ENCODE measurements at regions of chr1 and their contacts with region 1.

Region 1: GRCh38 chr1:161071886-161072371 is 2.2 kb upstream of the ARHGAP30 start:
- DNase-seq: peak; percentile 59 to 72
- ATAC-seq: peak; percentile 33 to 67 (median 55)
- H3K4me3 ChIP-seq: no peak overlapping the region
- H3K27ac ChIP-seq: no peak overlapping the region
- H3K4me1 ChIP-seq: no peaks in the 10 kb centered on the region
- H3K27me3 ChIP-seq: no peaks in the 10 kb centered on the region
- CTCF ChIP-seq: peak; percentile 44

Region 2: DNA sequence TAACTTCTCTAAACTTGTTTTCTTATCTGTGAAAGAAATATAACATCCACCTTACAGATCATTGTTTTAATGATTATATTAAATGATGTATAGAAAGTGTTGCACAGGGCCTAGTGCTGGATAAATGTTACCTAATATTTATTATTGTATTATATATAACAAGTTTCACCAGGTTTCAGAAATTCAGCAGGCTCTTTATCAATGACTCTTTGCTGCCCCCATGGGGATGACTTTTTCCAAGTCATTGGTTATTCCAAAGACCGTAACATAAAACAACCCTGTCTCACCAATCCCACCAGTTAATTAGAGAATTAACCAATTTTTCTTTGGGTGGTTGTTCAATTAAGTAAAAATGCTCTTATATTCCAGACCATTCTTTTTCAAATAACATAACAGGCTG is 67.8 kb after region 1 on chr1:
- intact Hi-C with region 1: loop called in 1 of 2 experiments (anchors 5 kb)
- DNase-seq: no peak
- ATAC-seq: peak in 2 of 4 donors; percentile 47 to 63
- H3K4me3 ChIP-seq: no peak overlapping the region
- H3K27ac ChIP-seq: no peak overlapping the region
- H3K4me1 ChIP-seq: peaks cover 13% of the 10 kb centered on the region
- H3K27me3 ChIP-seq: no peaks in the 10 kb centered on the region
- CTCF ChIP-seq: peak; percentile 56